ENCODE measurements at regions of chr14 and their contacts with region 1.

Region 1: GRCh38 chr14:75088574-75089373 is 19.3 kb downstream of the ZC2HC1C start:
- DNase-seq: no peak
- H3K4me3 ChIP-seq: no peak overlapping the region
- H3K27me3 ChIP-seq: no peaks in the 10 kb centered on the region
- CTCF ChIP-seq: peak; percentile 76

Region 2: GRCh38 chr14:74905375-74906142 is 183.2 kb before region 1 on chr14:
- CTCF ChIA-PET with region 1: interaction called, 107 read pairs
- POLR2A ChIA-PET with region 1: no interaction called
- DNase-seq: no peak
- H3K4me3 ChIP-seq: no peak overlapping the region
- H3K27me3 ChIP-seq: no peaks in the 10 kb centered on the region
- CTCF ChIP-seq: peak; percentile 93

Region 3: DNA sequence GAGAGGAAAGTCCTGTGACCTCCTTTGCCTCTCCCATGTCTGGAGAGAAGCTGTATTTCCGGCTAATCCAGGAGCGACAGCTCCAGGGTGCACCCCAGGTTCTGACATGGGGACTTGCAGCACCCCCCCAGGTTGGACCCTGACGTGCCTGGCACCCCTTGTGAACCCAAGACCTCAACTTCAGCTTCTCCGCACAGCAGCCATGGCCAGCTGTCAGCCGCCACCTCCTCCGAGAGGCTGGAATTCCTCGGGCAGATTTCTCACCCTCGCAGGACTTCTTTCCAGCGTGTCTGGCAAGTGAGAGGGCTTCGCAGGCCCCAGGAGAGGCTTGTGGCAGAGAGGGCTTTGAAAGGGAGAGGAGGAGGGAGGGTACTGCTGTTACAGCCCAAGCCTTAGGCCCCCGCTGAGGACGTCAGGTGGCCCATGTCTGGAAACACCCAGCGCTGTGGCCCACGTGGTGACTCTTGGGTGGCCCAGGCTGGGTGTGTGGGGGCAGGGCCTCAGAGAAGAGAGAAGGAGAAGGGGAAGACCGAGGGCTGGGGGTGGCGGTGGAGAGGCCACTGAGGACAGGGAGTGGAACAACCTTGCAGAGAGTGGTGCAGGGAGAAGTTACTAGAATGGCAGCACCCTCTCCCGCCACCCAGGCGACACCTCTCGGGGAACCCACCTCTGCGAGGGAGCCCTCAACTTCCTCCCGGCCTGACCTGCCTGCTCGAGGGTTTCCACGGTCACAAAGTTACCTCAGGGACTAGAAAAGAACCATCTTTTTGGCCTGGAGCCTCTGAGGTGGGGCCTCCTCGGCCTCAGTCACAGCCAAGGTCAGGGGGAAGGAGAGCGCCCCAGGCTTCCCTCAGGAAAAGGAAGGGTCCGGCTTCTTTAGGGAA is 154.1 kb before region 1 on chr14:
- CTCF ChIA-PET with region 1: interaction called, 19 read pairs
- POLR2A ChIA-PET with region 1: no interaction called
- DNase-seq: no peak
- H3K4me3 ChIP-seq: no peak overlapping the region
- H3K27me3 ChIP-seq: peaks cover 2% of the 10 kb centered on the region; the same call in 1 of the 2 replicates
- CTCF ChIP-seq: no peak

Region 4: GRCh38 chr14:74979442-74980361 is 109.1 kb before region 1 on chr14:
- CTCF ChIA-PET with region 1: interaction called, 13 read pairs
- POLR2A ChIA-PET with region 1: no interaction called
- DNase-seq: no peak
- H3K4me3 ChIP-seq: no peak overlapping the region
- H3K27me3 ChIP-seq: no peaks in the 10 kb centered on the region
- CTCF ChIP-seq: peak; percentile 43

Region 5: GRCh38 chr14:75001261-75001660 is 87.5 kb before region 1 on chr14:
- CTCF ChIA-PET with region 1: no interaction called
- POLR2A ChIA-PET with region 1: no interaction called
- DNase-seq: no peak
- H3K4me3 ChIP-seq: no peak overlapping the region
- H3K27me3 ChIP-seq: no peaks in the 10 kb centered on the region
- CTCF ChIP-seq: no peak

Region 6: DNA sequence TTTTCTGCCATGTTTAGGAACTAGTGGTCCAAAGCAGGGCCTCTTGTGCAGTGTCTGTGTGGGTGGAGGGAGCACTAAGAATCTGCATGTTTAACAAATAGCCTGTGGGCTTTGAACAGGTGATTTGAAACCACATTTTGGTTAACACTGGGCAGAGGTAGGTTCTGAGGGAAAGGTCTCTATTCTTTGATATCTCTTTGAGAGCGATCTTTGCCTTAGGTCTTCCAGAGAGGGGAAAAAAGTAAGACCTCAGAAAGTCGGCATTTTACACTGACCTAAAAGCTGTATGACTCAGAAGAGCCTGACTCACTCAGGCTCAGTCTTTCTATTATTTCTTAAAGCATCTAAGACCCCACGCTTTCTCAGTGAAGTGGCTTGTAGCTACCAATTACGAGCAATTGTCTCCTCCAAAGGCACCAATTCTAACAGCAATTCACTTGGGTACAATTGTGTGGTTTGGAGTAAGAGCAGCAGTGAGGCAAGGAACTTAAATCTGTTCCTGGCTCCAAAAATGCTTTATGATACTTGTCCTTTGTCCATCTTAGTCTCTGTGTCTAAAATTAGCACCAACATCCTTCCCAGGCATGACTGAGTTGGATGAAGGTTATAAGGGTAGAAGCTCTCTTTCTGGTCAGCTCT is 77.3 kb before region 1 on chr14:
- CTCF ChIA-PET with region 1: no interaction called
- POLR2A ChIA-PET with region 1: no interaction called
- DNase-seq: peak; percentile 17
- H3K4me3 ChIP-seq: no peak overlapping the region
- H3K27me3 ChIP-seq: no peaks in the 10 kb centered on the region
- CTCF ChIP-seq: no peak

Region 7: GRCh38 chr14:75101491-75101890 is 12.7 kb after region 1 on chr14:
- CTCF ChIA-PET with region 1: interaction called, 13 read pairs
- POLR2A ChIA-PET with region 1: no interaction called
- DNase-seq: no peak
- H3K4me3 ChIP-seq: no peak overlapping the region
- H3K27me3 ChIP-seq: no peaks in the 10 kb centered on the region
- CTCF ChIP-seq: no peak